Psoas muscle (tissue), 8 donors: ENCODE measurements at regions of chr20 and their contacts with region 1.

Region 1: DNA sequence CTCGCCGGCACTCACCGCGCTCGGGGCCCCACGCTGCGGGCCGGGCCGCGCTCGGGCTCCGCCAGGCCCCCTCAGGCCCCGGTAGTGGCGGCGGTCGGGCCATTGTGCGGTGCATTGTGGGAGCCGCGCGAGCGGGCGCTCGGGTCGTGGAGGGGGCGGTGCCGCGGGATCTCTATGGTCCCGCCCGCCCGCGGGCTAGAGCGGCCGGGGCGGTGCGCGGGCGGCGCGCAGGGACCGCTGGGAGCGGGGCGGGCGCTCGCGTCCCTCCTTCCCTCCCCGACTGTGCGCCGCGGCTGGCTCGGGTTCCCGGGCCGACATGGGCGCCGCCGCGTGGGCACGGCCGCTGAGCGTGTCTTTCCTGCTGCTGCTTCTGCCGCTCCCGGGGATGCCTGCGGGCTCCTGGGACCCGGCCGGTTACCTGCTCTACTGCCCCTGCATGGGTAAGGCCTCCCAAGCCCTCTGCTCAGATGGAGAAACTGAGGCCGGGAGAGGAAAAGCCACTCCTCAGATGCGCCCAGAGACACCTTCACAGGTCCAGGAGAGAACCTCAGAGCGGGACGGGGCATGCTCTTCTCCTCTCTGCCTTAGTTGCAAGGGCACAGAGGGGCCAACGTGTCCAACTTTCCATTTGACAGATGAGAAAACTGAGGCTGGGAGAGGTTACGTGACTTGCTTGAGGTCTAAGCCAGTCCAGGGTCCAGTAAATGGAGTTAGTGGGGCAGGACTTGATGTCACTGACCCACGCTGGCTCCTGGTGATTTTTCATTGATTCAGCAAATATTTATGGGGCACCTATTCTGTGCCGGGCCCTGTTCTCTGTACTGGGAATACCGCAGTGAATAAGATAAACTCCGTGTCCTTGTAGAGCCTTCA is at the starts of genes PLAGL2 and POFUT1:
- DNase-seq: peak; percentile 92 to 95
- ATAC-seq: peak; percentile 82 to 92 (median 88)
- H3K4me3 ChIP-seq: peak within 1 kb of the TSS; percentile 91
- H3K27ac ChIP-seq: peak within 1 kb of the TSS; percentile 96
- H3K4me1 ChIP-seq: peaks cover 64% of the 10 kb centered on the region
- H3K27me3 ChIP-seq: no peaks in the 10 kb centered on the region
- CTCF ChIP-seq: no peak
- total RNA-seq, gene PLAGL2: 4.9 to 9.6 (median 6.0) TPM
- total RNA-seq, gene POFUT1: 14.0 to 20.8 (median 17.1) TPM

Region 2: GRCh38 chr20:32109392-32110172 is 98.3 kb before region 1 on chr20 and contains the start of gene TM9SF4:
- intact Hi-C with region 1: loop called in 1 of 2 experiments (anchors 10 kb)
- DNase-seq: peak; percentile 88 to 94
- ATAC-seq: peak; percentile 94 to 97 (median 96)
- H3K4me3 ChIP-seq: peak within 1 kb of the TSS; percentile 88
- H3K27ac ChIP-seq: peak within 1 kb of the TSS; percentile 99
- H3K4me1 ChIP-seq: peaks cover 24% of the 10 kb centered on the region
- H3K27me3 ChIP-seq: no peaks in the 10 kb centered on the region
- CTCF ChIP-seq: no peak
- total RNA-seq, gene TM9SF4: 25.7 to 28.0 (median 27.0) TPM

Region 3: GRCh38 chr20:32152421-32153155 is 55.3 kb before region 1 on chr20:
- intact Hi-C with region 1: loop called in 1 of 2 experiments (anchors 5 kb)
- DNase-seq: no peak
- ATAC-seq: no peak
- H3K4me3 ChIP-seq: no peak overlapping the region
- H3K27ac ChIP-seq: peak overlapping the region; percentile 24
- H3K4me1 ChIP-seq: peaks cover 17% of the 10 kb centered on the region
- H3K27me3 ChIP-seq: no peaks in the 10 kb centered on the region
- CTCF ChIP-seq: no peak

Region 4: GRCh38 chr20:32282461-32282860 is 74.6 kb after region 1 on chr20:
- intact Hi-C with region 1: loop called in 1 of 2 experiments (anchors 5 kb)
- DNase-seq: peak in 1 of 2 donors; percentile 55
- ATAC-seq: peak; percentile 71 to 73 (median 72)
- H3K4me3 ChIP-seq: no peak overlapping the region
- H3K27ac ChIP-seq: peak overlapping the region; percentile 8
- H3K4me1 ChIP-seq: peaks cover 25% of the 10 kb centered on the region
- H3K27me3 ChIP-seq: no peaks in the 10 kb centered on the region
- CTCF ChIP-seq: no peak

Region 5: GRCh38 chr20:32357869-32358631 is 150.2 kb after region 1 on chr20 and contains the start of gene ASXL1:
- intact Hi-C with region 1: loop called (anchors 2 to 10 kb)
- DNase-seq: peak; percentile 97 to 98
- ATAC-seq: peak; percentile 94 to 97 (median 96)
- H3K4me3 ChIP-seq: peak within 1 kb of the TSS; percentile 96
- H3K27ac ChIP-seq: peak within 1 kb of the TSS; percentile 98
- H3K4me1 ChIP-seq: peaks cover 38% of the 10 kb centered on the region
- H3K27me3 ChIP-seq: no peaks in the 10 kb centered on the region
- CTCF ChIP-seq: no peak
- total RNA-seq, gene ASXL1: 22.4 to 52.0 (median 41.5) TPM

Region 6: GRCh38 chr20:32574296-32575226 is 366.7 kb after region 1 on chr20:
- intact Hi-C with region 1: no loop called
- DNase-seq: no peak
- ATAC-seq: peak in 2 of 4 donors; percentile 27 to 40
- H3K4me3 ChIP-seq: no peak overlapping the region
- H3K27ac ChIP-seq: no peak overlapping the region
- H3K4me1 ChIP-seq: no peaks in the 10 kb centered on the region
- H3K27me3 ChIP-seq: peaks cover 0 to 2% (median 0%) of the 10 kb centered on the region in 3 donors
- CTCF ChIP-seq: no peak